Heart left ventricle (tissue), 16 donors: ENCODE measurements at regions of chr11 and their contacts with region 1.

Region 1: GRCh38 chr11:120929664-120930154 is 94.2 kb upstream of the TBCEL start:
- DNase-seq: peak in 3 of 5 donors; percentile 22 to 44 (median 39)
- ATAC-seq: peak in 3 of 4 donors; percentile 69 to 75 (median 72)
- H3K4me3 ChIP-seq: no peak overlapping the region
- H3K27ac ChIP-seq: no peak overlapping the region
- H3K4me1 ChIP-seq: no peaks in the 10 kb centered on the region
- H3K27me3 ChIP-seq: peaks cover 0 to 13% (median 0%) of the 10 kb centered on the region in 9 donors
- CTCF ChIP-seq: peak in 11 of 12 donors; percentile 28 to 66 (median 49)
- POLR2A ChIP-seq: no peak

Region 2: DNA sequence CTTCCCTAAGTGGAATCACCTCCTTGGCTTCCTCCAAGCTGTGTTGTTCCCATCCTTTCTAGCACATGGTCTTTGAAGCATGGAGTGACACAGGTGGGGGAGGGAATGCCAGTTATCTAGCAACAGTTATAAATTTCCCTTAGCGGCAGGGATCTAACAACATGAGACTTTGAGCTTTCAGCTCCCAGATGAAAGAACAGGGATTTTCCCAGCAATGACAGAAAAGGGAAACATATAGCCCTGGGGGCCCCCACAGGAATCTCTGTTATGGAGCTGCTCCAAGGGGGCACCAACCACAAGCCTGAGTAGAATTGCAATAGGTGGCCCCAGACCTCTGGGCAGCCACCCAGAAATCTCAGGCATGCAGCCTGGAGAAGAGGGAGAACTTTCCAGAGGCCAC is 255.2 kb before region 1 on chr11:
- intact Hi-C with region 1: loop called in 1 of 10 experiments (anchors 10 kb)
- DNase-seq: no peak
- ATAC-seq: no peak
- H3K4me3 ChIP-seq: no peak overlapping the region
- H3K27ac ChIP-seq: no peak overlapping the region
- H3K4me1 ChIP-seq: peaks cover 0 to 5% (median 0%) of the 10 kb centered on the region in 12 donors
- H3K27me3 ChIP-seq: peaks cover 0 to 48% (median 6%) of the 10 kb centered on the region in 9 donors
- CTCF ChIP-seq: no peak
- POLR2A ChIP-seq: no peak